ENCODE measurements at regions of chr1 and their contacts with region 1.

Region 1: DNA sequence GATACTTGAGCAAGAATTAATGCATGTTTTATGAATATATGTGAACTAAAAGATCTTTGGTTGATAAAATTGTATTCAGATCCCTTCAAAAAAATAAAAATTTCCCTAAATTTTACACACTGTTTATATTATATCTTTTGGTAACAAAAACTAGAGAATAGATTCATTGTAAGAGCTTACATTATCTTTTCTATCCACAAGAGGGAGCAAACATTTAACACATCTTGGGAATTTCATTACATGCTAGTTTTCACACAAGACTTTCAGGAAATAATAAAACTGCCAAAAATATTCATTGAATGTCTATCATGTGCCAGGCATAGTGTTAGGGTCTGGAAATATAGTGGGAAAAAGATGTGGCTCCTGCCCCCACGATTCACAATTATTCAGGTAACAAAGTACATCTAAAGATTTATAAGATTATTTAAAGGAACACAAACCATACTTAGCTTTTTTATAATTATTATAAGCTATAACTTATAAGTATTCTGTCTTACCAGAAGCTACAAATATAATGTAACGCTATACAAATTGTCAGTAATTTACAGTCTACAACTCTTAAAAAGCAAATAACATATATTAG is 30.6 kb downstream of the FAF1 start:
- DNase-seq: peak; percentile 39 to 54 (median 50)
- H3K4me3 ChIP-seq: no peak overlapping the region
- H3K27ac ChIP-seq: no peak overlapping the region
- H3K4me1 ChIP-seq: no peaks in the 10 kb centered on the region
- H3K27me3 ChIP-seq: no peaks in the 10 kb centered on the region

Region 2: DNA sequence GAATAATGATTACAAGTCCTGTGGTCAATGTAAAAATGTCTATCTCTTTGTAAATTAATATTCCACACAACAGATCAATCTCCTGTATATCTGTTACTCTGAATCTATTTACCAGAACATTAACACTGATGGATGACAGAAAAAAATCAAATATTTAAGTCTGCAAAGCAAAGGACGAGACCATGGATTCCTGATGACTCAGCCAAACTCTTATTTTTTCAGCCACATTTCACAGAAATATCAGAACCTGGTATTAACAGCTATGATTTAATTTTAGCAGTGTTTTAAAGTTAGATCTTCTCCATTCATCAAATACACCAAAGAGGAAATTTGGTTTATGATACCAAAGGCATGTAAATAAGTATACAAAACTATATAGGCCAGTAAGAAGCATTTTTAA is 15.5 kb before region 1 on chr1:
- CTCF ChIA-PET with region 1: no interaction called
- POLR2A ChIA-PET with region 1: no interaction called
- DNase-seq: no peak
- H3K4me3 ChIP-seq: no peak overlapping the region
- H3K27ac ChIP-seq: no peak overlapping the region
- H3K4me1 ChIP-seq: no peaks in the 10 kb centered on the region
- H3K27me3 ChIP-seq: no peaks in the 10 kb centered on the region

Region 3: GRCh38 chr1:50940291-50940690 is 10.8 kb after region 1 on chr1:
- CTCF ChIA-PET with region 1: interaction called, 17 read pairs
- POLR2A ChIA-PET with region 1: no interaction called
- DNase-seq: no peak
- H3K4me3 ChIP-seq: no peak overlapping the region
- H3K27ac ChIP-seq: no peak overlapping the region
- H3K4me1 ChIP-seq: no peaks in the 10 kb centered on the region
- H3K27me3 ChIP-seq: no peaks in the 10 kb centered on the region

Region 4: DNA sequence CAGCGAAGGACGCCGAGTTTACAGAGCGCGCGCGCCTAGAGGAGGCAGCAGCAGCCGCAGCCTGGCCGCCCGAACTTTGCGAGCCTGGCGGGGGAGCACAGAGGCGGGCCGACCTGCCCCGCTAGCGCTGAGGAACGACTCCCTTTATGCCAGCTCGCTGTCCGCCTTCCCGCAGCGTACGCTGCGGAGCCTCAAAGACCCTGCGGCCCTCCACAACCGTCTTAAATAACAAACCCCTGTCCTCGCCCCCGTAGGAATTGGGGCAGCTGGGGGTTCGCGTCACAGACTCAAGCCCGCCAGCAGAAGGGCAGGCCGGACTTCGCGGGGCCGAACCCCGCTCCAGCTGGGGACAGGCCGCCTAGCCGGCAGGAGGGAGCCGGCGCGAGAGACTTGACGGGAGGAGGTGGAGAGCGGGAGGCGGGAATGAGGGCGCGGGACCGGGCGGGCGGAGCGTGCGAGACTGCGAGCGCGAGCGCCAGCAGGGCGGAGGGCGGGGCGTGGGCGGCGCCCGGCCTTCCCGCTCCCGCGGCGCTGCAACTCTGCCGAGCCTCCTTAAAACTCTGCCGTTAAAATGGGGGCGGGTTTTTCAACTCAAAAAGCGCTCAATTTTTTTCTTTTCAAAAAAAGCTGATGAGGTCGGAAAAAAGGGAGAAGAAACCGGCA is 38.8 kb after region 1 on chr1:
- CTCF ChIA-PET with region 1: interaction called, 11 read pairs
- POLR2A ChIA-PET with region 1: no interaction called
- DNase-seq: peak; percentile 86 to 92 (median 89)
- H3K4me3 ChIP-seq: peak overlapping the region; percentile 85 to 99 (median 97)
- H3K27ac ChIP-seq: peak overlapping the region; percentile 64 to 85
- H3K4me1 ChIP-seq: peaks cover 8 to 41% (median 18%) of the 10 kb centered on the region in 4 experiments
- H3K27me3 ChIP-seq: peaks cover 0 to 2% (median 0%) of the 10 kb centered on the region in 5 experiments

Measured in common myeloid progenitor, CD34-positive (primary cell).